Breast epithelium (tissue), 4 donors: ENCODE measurements at regions of chr4 and their contacts with region 1.

Region 1: GRCh38 chr4:64889906-64890615 is 480.8 kb upstream of the TECRL start:
- DNase-seq: no peak
- H3K4me3 ChIP-seq: no peak overlapping the region
- H3K27ac ChIP-seq: no peak overlapping the region
- H3K4me1 ChIP-seq: no peaks in the 10 kb centered on the region
- H3K27me3 ChIP-seq: no peaks in the 10 kb centered on the region
- CTCF ChIP-seq: no peak
- POLR2A ChIP-seq: no peak

Region 2: DNA sequence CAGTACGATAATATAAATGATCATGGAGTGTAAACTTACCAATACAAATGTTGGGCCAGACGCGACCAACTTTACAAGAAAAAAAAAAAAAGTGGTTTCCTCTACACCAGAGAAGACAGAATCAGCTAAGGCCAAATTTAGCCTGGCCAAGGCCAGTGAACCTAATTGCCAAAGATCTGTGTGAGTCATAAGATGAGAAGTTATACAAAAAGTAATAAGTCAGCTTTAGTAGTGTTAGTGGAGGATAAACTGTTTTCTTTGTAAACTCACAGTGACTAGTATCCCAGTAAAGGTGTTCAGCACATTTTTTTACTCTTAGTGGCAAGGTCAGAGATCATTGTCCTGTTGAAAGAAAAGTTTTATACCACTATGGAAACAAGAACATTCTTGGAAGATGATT is 50.6 kb after region 1 on chr4:
- intact Hi-C with region 1: loop called (anchors 2 kb)
- DNase-seq: no peak
- H3K4me3 ChIP-seq: no peak overlapping the region
- H3K27ac ChIP-seq: no peak overlapping the region
- H3K4me1 ChIP-seq: no peaks in the 10 kb centered on the region
- H3K27me3 ChIP-seq: no peaks in the 10 kb centered on the region
- CTCF ChIP-seq: no peak
- POLR2A ChIP-seq: no peak

Region 3: GRCh38 chr4:65139998-65140397 is 249.9 kb after region 1 on chr4:
- intact Hi-C with region 1: no loop called
- DNase-seq: no peak
- H3K4me3 ChIP-seq: no peak overlapping the region
- H3K27ac ChIP-seq: no peak overlapping the region
- H3K4me1 ChIP-seq: no peaks in the 10 kb centered on the region
- H3K27me3 ChIP-seq: no peaks in the 10 kb centered on the region
- CTCF ChIP-seq: no peak
- POLR2A ChIP-seq: no peak